OCI-LY7 (cell line): ENCODE measurements at regions of chr12 and their contacts with region 1.

Region 1: GRCh38 chr12:48197971-48198671 is 5.0 kb downstream of the OR10AD1 start:
- DNase-seq: peak; percentile 88
- H3K4me3 ChIP-seq: peak overlapping the region; percentile 68
- H3K27ac ChIP-seq: peak overlapping the region; percentile 43
- H3K4me1 ChIP-seq: peaks cover 13% of the 10 kb centered on the region
- CTCF ChIP-seq: no peak

Region 2: DNA sequence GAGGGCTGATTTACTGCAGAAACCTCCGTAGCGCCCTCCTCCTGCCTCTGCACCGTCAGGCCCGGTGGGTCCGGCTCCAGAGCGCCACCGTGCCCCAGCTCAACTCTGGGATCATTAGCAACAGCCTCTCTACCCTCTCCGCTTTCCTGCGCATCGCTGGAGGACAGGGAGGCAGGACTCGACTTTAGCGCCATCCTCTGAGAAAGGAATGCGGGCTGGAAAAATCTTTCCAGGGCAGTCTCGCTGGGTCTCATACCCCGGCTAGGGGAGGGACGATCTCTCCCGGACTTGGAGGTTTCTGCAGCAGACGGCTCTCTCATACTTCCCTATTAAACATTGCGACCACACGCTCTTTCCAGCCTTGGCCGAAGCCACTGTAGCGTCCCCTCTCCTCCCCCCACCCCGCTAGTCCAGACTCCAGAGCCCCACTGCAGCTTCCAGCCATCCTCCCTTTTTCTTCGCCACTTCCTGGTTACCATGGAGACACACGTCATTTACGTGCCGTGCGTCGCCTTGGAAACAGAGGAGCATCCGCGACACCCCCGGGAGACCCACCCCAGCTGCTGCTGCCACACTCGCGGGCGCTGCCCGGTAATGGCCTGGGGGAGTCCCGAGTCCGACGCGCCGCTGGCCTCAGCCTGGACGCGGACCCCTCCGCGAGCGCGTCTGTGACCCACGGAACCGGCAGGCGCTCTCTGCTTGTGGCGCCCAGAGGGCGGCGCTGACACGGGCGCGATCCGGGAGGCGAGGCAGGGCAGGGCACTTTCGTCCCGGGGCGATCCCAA is 14.8 kb before region 1 on chr12 and contains the start of gene CCDC184:
- CTCF ChIA-PET with region 1: interaction called, 4 read pairs
- POLR2A ChIA-PET with region 1: interaction called, 12 read pairs
- intact Hi-C with region 1: no loop called
- DNase-seq: peak; percentile 85
- H3K4me3 ChIP-seq: peak within 1 kb of the TSS; percentile 78
- H3K27ac ChIP-seq: no peak within 1 kb of the TSS
- H3K4me1 ChIP-seq: peaks cover 8% of the 10 kb centered on the region
- CTCF ChIP-seq: peak; percentile 76
- total RNA-seq, gene CCDC184: not detected in 2 replicates

Region 3: DNA sequence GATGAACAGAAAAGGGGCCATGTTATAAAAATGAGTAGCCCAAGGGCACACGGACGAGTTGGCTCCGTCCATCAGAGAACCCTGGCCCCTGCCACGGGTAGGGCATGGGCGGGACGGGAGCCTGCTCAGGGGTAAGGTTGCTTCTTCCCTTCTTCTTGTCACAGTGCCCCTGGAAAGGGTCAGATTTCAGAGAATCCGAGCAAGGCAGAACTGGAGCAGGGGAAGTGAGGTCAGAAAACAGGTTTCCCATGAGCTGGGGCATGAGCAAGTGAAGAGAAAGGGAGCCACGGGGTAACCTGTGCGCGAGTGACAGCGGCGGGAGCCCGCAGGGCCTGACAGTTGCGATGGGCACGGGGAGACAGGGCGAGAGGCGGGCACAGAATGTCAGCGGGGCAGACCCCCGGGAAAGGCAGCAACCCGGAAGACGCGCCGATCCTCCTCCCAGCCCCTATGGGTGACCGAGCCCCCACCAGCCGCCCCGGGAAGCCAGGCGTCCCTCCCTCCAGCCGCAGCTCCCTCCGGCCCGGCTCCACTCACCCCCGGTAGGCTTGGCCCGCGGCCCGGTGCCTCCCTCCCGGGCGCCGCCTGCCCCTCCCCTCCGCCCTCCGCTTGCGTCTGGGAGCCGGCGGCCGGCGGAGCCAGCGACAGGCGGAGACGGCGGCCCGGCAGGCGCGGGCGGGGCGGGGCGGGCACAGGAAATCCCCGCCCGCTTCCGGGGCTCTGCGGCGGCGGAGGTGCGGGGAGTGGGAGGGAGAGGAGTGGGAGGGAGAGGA is 152.3 kb after region 1 on chr12 and contains the start of gene ZNF641:
- CTCF ChIA-PET with region 1: no interaction called
- POLR2A ChIA-PET with region 1: no interaction called
- intact Hi-C with region 1: loop called (anchors 5 kb)
- DNase-seq: peak; percentile 84
- H3K4me3 ChIP-seq: peak within 1 kb of the TSS; percentile 75
- H3K27ac ChIP-seq: peak within 1 kb of the TSS; percentile 45
- H3K4me1 ChIP-seq: peaks cover 11% of the 10 kb centered on the region
- CTCF ChIP-seq: no peak
- total RNA-seq, gene ZNF641: 11.8 and 21.2 TPM in 2 replicates